ENCODE measurements at regions of chrX and their contacts with region 1.

Region 1: GRCh38 chrX:45749375-45749774 is 548.7 kb upstream of the DIPK2B start:
- DNase-seq: no peak
- H3K4me3 Mint-ChIP-seq: no peak overlapping the region
- H3K27ac Mint-ChIP-seq: peak overlapping the region; percentile 60
- H3K4me1 Mint-ChIP-seq: peaks cover 22% of the 10 kb centered on the region
- H3K27me3 Mint-ChIP-seq: peaks cover 25% of the 10 kb centered on the region
- CTCF ChIP-seq: peak; percentile 41

Region 2: GRCh38 chrX:45322382-45322781 is 427.0 kb before region 1 on chrX:
- CTCF ChIA-PET with region 1: interaction called, 3 read pairs
- POLR2A ChIA-PET with region 1: interaction called, 5 read pairs
- intact Hi-C with region 1: loop called (anchors 1 kb)
- DNase-seq: peak; percentile 77
- H3K4me3 Mint-ChIP-seq: no peak overlapping the region
- H3K27ac Mint-ChIP-seq: no peak overlapping the region
- H3K4me1 Mint-ChIP-seq: no peaks in the 10 kb centered on the region
- H3K27me3 Mint-ChIP-seq: peaks cover 68% of the 10 kb centered on the region
- CTCF ChIP-seq: peak; percentile 63

Region 3: DNA sequence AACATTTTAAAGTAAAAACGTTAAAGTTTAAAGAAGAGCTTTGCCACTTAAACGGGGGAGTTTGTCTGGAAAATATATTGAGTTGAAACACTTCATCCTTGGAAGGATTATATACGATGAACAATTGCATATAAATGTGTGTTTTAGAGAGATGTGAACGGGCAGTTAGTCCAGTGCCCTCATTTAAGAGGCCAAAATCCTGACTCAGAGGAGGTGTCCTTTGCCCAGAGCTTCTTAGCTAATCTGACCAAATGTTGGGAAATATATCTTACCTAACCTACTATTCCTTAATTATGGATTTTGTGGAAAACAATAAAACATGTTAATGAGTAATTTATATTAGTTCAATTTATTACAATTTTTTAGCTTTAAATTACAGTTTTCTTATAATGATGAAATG is 221.5 kb before region 1 on chrX:
- CTCF ChIA-PET with region 1: no interaction called
- POLR2A ChIA-PET with region 1: no interaction called
- intact Hi-C with region 1: no loop called
- DNase-seq: peak; percentile 47
- H3K4me3 Mint-ChIP-seq: no peak overlapping the region
- H3K27ac Mint-ChIP-seq: no peak overlapping the region
- H3K4me1 Mint-ChIP-seq: peaks cover 8% of the 10 kb centered on the region
- H3K27me3 Mint-ChIP-seq: peaks cover 42% of the 10 kb centered on the region
- CTCF ChIP-seq: no peak

Region 4: DNA sequence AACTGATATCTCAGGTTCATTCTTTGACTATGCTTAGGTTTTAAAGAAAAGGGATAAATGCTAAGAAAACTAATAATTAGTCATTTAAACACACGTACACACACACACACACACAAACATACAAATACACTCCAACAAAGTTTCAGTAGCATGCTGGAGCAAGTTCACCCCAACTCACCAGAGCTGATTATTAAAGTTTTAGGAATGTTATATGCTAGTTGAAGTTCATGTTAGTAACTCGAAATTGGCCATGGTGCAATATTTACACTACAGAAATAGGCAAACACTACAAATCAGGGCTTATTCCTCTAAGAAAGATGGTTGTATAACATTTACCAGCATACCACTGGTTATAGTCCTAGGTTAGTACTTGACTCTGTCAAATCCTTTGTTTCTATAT is 164.7 kb before region 1 on chrX:
- CTCF ChIA-PET with region 1: no interaction called
- POLR2A ChIA-PET with region 1: no interaction called
- intact Hi-C with region 1: no loop called
- DNase-seq: no peak
- H3K4me3 Mint-ChIP-seq: no peak overlapping the region
- H3K27ac Mint-ChIP-seq: no peak overlapping the region
- H3K4me1 Mint-ChIP-seq: no peaks in the 10 kb centered on the region
- H3K27me3 Mint-ChIP-seq: peaks cover 42% of the 10 kb centered on the region
- CTCF ChIP-seq: no peak

Region 5: DNA sequence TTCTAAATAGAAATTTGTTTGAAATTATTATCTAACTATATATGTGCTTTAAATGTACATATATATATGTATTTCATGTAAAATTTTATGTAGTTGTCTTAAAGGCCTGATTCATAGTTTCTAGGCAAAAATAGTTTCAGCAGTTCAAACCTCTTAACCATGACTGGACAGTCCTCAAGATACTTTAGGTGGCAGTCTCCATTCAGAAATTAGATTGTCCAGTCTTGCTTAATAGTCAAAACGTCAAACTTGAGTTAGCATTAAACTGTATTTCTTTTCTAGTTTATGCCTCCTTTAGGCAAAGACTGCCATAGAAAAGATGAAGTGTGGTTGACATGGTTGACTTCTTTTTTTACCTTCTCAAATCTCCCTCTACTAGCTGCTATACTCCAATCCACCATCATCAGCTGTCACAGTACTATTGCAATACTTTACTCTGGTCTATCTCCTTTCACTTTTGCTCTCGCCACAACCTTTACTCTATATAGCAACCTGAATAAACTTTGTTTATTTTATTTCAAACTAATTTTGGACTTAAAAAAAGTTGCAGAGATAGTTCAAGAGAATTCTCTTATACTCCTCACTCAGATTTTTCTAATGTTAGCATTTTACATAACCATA is 153.1 kb before region 1 on chrX:
- CTCF ChIA-PET with region 1: interaction called, 3 read pairs
- POLR2A ChIA-PET with region 1: interaction called, 3 read pairs
- intact Hi-C with region 1: loop called (anchors 1 kb)
- DNase-seq: peak; percentile 9
- H3K4me3 Mint-ChIP-seq: no peak overlapping the region
- H3K27ac Mint-ChIP-seq: no peak overlapping the region
- H3K4me1 Mint-ChIP-seq: no peaks in the 10 kb centered on the region
- H3K27me3 Mint-ChIP-seq: peaks cover 76% of the 10 kb centered on the region
- CTCF ChIP-seq: no peak

Region 6: GRCh38 chrX:45621376-45622041 is 127.9 kb before region 1 on chrX:
- CTCF ChIA-PET with region 1: no interaction called
- POLR2A ChIA-PET with region 1: interaction called, 11 read pairs
- intact Hi-C with region 1: no loop called
- DNase-seq: peak; percentile 65
- H3K4me3 Mint-ChIP-seq: no peak overlapping the region
- H3K27ac Mint-ChIP-seq: peak overlapping the region; percentile 86
- H3K4me1 Mint-ChIP-seq: peaks cover 18% of the 10 kb centered on the region
- H3K27me3 Mint-ChIP-seq: peaks cover 28% of the 10 kb centered on the region
- CTCF ChIP-seq: no peak

Region 7: GRCh38 chrX:45697591-45697990 is 51.8 kb before region 1 on chrX:
- CTCF ChIA-PET with region 1: no interaction called
- POLR2A ChIA-PET with region 1: no interaction called
- intact Hi-C with region 1: no loop called
- DNase-seq: peak; percentile 43
- H3K4me3 Mint-ChIP-seq: no peak overlapping the region
- H3K27ac Mint-ChIP-seq: no peak overlapping the region
- H3K4me1 Mint-ChIP-seq: peaks cover 5% of the 10 kb centered on the region
- H3K27me3 Mint-ChIP-seq: peaks cover 11% of the 10 kb centered on the region
- CTCF ChIP-seq: no peak

Measured in MCF 10A (cell line).